ENCODE measurements at regions of chr16 and their contacts with region 1.

Region 1: DNA sequence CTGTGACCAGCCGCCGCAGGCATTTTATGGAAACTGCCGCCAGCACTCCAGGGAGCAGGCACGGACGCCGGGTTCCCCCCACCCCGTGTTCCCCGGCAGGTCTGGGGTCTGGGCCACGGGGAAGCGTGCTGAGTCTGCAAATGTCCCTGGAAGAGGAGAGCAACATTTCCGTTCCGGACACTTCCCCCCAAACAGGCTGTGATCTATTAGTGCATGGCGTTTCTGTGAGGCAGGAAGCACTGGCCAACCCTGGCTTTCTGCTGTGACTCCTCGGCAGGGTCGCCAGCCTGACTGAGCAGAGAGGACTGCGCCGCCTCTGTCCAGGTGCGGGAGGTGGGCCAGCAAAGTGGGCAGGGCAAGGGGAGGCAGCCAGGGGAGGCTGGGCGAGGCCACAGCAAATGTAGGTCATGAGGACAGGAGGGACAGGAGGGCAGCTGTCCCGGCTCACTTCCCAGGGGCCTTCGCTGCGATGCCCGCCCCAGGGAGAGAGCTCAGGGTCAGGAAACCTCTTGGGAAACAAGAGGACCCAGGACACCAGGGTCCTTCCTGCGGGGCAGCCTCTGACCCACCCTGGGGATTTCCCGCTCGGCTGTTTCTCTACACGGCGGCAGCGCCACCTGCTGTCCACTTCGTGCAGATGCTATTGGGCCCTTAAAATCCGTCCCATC is 9.5 kb downstream of the FOXF1 start:
- DNase-seq: peak; percentile 79
- CTCF ChIP-seq: peak; percentile 92

Region 2: GRCh38 chr16:86072328-86073102 is 447.3 kb before region 1 on chr16:
- CTCF ChIA-PET with region 1: interaction called, 53 read pairs
- POLR2A ChIA-PET with region 1: no interaction called
- DNase-seq: peak; percentile 77
- CTCF ChIP-seq: peak; percentile 75

Region 3: GRCh38 chr16:86129541-86129940 is 390.2 kb before region 1 on chr16:
- CTCF ChIA-PET with region 1: no interaction called
- POLR2A ChIA-PET with region 1: no interaction called
- DNase-seq: no peak
- CTCF ChIP-seq: no peak

Region 4: DNA sequence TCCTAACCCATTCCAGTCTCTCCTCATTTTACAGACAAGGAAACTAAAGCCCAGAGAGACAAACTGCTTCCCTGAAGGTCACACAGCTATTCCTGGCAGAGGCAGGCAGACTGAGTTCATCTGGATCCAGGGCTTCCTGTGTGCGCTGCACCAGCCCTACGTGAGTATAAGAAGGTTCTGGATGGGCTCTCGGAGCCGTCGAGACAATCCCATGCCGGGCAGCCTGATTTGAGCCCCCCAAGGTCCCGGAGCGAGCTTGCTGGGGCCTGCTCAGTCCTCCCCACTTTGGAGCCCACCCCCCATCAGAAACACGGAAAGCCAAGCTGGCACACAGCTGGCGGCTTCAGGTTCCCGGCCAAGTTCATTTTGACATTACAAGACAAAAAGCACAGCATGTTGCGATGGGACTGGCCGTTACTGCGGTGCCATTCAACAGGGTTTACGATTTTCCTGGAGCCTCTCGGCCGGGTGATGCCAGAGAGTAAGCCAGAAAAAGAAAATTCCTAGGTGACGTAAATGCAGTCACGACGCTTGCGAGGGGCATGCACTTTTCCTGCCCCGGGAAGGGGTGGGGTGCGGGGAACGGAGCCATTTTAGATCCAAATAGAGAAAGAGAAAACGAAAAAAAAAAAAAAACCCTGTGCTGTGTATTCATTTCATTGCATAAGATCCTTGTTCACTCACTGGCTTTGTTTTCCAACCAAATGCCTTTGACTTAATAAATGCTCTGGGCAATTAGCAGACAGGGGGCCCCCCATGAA is 176.6 kb before region 1 on chr16:
- CTCF ChIA-PET with region 1: interaction called, 19 read pairs
- POLR2A ChIA-PET with region 1: no interaction called
- DNase-seq: no peak
- CTCF ChIP-seq: no peak

Region 5: DNA sequence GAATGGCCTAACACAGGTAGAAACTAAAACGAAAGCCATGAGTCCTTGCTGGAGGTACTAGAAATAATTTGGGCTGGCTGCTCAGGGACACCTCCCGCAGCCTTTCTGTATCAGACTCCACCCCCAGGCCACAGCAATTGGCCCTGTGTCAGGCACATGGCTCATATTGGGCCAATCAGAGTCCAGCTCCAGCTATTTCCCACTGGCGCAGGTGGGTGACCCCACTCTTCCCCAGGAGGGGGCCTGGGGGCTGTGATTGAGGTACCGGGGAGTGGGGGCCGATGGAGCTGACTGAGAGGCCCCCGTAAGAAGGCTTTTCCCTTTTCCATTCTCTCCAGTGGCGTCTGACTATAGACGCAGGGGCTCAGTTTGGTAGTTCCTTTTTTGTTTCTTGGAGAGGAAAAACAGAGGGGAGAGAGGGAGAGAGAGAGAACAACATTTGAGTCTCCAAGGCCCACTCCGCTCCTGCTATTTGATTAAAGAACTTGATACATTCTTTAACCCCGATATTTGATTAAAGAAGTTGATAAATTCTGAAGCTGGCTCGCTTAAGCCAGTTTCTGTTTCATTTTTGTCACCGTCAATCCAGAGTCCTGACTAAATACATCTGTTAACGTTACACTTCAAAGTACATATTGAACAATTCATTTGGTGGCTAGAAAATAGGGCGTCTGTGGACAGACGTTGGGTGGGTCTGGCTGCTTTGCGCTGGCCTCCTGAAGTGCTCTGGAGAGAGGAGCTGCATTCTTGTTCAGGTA is 84.8 kb after region 1 on chr16:
- CTCF ChIA-PET with region 1: no interaction called
- POLR2A ChIA-PET with region 1: no interaction called
- DNase-seq: peak; percentile 69
- CTCF ChIP-seq: no peak